Activated CD4-positive, alpha-beta T cell treated with anti-CD3 and anti-CD28 coated beads, Interleukin-2, amount 10 ng/mL, durations not matched to agents 24 days and 14 days (primary cell): ENCODE measurements at regions of chr1 and their contacts with region 1.

Region 1: DNA sequence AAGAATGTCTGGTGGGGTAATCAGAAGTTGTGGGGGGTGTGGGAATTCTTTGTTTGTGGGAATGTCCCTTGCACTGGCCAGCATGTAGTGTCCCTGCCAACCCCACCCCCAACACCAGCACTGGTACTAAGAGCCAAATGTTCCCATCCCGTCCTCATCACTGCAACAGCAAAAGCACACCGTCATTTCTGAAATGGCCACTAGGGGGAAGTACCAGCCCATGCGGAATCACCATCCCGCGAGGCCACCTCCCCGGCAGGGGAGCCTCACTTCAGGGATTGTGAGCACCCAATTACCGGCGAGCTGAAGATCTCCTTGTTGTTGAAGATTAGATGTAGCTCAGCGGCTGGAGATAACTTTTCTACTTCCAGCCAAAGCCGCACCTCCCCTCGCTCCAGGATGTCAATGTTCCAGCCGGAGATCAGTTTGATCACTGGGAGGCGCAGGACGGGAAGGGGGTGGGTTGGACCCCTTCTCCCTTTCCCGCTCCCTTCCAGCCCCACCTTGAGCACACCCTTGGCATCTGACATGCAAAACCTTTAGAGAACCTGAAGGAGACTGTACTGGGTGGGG is 41.0 kb downstream of the MYOM3 start:
- DNase-seq: peak; percentile 92
- H3K4me3 Mint-ChIP-seq: no peak overlapping the region
- H3K27ac Mint-ChIP-seq: no peak overlapping the region
- H3K4me1 Mint-ChIP-seq: peaks cover 4% of the 10 kb centered on the region
- H3K27me3 Mint-ChIP-seq: peaks cover 8% of the 10 kb centered on the region

Region 2: DNA sequence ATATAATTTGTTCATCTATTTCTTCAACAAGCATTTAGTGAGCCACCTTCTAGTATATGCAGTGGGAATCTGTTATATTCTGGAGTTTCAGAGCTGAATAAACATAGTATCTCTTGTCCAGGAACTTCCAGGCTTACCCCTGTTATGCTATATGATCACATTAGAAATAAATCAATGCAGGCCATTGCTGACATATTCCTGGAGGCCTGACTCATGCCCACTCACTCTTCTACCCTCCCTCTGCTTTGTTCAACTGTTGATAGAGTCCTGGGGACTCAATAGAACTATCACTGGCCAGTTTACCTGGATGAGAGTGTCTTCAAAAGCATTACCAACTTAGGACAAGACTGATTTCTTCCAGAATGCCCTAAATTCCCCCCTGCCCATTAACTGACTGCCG is 61.5 kb before region 1 on chr1:
- intact Hi-C with region 1: no loop called
- DNase-seq: no peak
- H3K4me3 Mint-ChIP-seq: no peak overlapping the region
- H3K27ac Mint-ChIP-seq: no peak overlapping the region
- H3K4me1 Mint-ChIP-seq: peaks cover 1% of the 10 kb centered on the region
- H3K27me3 Mint-ChIP-seq: peaks cover 27% of the 10 kb centered on the region

Region 3: DNA sequence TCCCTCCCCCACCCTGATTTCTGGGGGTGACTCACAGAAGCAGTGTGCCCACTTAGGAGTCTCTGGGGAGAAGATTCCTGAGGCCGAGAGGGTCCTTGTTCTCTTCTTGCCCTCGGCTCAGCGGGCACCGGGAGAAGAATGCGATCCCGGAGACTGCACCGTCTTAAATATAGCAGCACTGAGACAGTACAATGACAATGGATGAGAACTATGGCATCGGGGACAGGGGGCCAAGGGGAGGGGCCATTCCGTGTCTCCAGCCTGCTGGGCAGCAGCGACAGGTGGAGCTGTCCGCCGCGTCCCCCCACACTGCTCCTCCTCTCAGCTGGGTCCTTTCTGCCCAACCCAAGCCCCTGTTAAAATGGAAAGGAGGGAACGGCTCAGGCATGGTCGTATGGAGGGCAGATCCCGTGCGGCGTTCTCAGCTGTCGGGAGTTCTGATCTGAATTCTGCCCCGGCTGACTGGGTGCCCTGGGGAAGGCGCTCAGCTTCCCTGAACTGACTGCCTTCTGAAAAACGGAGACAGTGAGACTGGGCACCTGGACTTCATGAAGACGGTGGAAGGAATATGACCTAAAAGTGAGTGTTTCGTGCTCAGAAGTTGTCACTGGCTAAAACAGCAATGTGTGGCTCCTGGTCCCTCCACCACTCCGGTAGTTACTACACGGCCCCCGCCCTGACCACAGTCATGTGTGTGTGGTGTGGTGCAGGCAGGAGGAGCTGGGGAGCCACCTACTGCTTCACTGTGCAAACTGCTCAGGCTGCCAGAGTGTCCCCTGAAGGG is 41.3 kb after region 1 on chr1 and contains the start of gene MYOM3:
- intact Hi-C with region 1: loop called (anchors 1 kb)
- DNase-seq: peak; percentile 86
- H3K4me3 Mint-ChIP-seq: peak within 1 kb of the TSS; percentile 30
- H3K27ac Mint-ChIP-seq: no peak within 1 kb of the TSS
- H3K4me1 Mint-ChIP-seq: peaks cover 7% of the 10 kb centered on the region
- H3K27me3 Mint-ChIP-seq: peaks cover 19% of the 10 kb centered on the region
- total RNA-seq, gene MYOM3: not detected in 2 replicates

Region 4: DNA sequence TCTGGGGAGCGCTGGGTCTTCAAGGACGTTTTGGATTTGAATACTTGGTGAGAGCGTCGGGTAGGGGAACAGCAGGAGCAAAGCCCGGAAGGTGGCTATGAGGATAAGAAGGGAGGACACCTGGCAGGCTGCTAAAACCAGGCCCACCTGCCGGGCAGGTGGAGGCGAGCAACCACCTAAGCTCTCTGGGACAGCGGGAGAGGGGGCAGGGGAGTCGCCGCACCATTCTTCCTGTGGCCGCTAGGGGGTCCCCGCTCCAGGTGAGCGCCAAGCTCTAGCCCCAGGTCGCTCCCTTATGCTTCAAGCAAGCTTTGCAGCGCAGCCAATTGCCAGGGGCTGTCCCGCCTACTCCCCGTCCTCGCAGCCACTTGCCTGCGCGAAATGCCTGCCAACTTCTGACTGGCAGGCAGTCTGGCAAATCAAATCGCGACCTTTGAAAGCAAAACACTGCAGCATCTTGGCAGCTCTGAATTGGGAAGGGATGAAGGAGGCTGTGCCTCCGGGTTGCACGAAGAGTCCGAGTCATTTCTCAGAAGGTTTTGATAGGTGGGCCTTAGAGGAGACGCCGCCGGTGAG is 344.5 kb after region 1 on chr1 and contains the start of gene NIPAL3:
- intact Hi-C with region 1: no loop called
- DNase-seq: peak; percentile 99
- H3K4me3 Mint-ChIP-seq: peak within 1 kb of the TSS; percentile 88
- H3K27ac Mint-ChIP-seq: peak within 1 kb of the TSS; percentile 90
- H3K4me1 Mint-ChIP-seq: peaks cover 53% of the 10 kb centered on the region
- H3K27me3 Mint-ChIP-seq: no peaks in the 10 kb centered on the region
- total RNA-seq, gene NIPAL3: 25.1 and 26.3 TPM in 2 replicates